Transverse colon (tissue), 4 donors: ENCODE measurements at regions of chr2 and their contacts with region 1.

Region 1: GRCh38 chr2:2472881-2473280 is 141.8 kb upstream of the MYT1L start:
- DNase-seq: no peak
- H3K4me3 ChIP-seq: no peak overlapping the region
- H3K27ac ChIP-seq: no peak overlapping the region
- H3K4me1 ChIP-seq: no peaks in the 10 kb centered on the region
- H3K27me3 ChIP-seq: no peaks in the 10 kb centered on the region
- CTCF ChIP-seq: no peak
- EP300 ChIP-seq: no peak
- POLR2A ChIP-seq: no peak

Region 2: GRCh38 chr2:2503864-2504418 is 31.1 kb after region 1 on chr2:
- in situ Hi-C with region 1: no loop called
- intact Hi-C with region 1: loop called (anchors 1 kb)
- DNase-seq: no peak
- H3K4me3 ChIP-seq: no peak overlapping the region
- H3K27ac ChIP-seq: no peak overlapping the region
- H3K4me1 ChIP-seq: no peaks in the 10 kb centered on the region
- H3K27me3 ChIP-seq: no peaks in the 10 kb centered on the region
- CTCF ChIP-seq: no peak
- EP300 ChIP-seq: no peak
- POLR2A ChIP-seq: no peak

Region 3: GRCh38 chr2:2686222-2686621 is 213.3 kb after region 1 on chr2:
- in situ Hi-C with region 1: no loop called
- intact Hi-C with region 1: no loop called
- DNase-seq: no peak
- H3K4me3 ChIP-seq: no peak overlapping the region
- H3K27ac ChIP-seq: no peak overlapping the region
- H3K4me1 ChIP-seq: no peaks in the 10 kb centered on the region
- H3K27me3 ChIP-seq: no peaks in the 10 kb centered on the region
- CTCF ChIP-seq: no peak
- EP300 ChIP-seq: no peak
- POLR2A ChIP-seq: no peak